Naive thymus-derived CD4-positive, alpha-beta T cell (primary cell): ENCODE measurements at regions of chr5 and their contacts with region 1.

Region 1: DNA sequence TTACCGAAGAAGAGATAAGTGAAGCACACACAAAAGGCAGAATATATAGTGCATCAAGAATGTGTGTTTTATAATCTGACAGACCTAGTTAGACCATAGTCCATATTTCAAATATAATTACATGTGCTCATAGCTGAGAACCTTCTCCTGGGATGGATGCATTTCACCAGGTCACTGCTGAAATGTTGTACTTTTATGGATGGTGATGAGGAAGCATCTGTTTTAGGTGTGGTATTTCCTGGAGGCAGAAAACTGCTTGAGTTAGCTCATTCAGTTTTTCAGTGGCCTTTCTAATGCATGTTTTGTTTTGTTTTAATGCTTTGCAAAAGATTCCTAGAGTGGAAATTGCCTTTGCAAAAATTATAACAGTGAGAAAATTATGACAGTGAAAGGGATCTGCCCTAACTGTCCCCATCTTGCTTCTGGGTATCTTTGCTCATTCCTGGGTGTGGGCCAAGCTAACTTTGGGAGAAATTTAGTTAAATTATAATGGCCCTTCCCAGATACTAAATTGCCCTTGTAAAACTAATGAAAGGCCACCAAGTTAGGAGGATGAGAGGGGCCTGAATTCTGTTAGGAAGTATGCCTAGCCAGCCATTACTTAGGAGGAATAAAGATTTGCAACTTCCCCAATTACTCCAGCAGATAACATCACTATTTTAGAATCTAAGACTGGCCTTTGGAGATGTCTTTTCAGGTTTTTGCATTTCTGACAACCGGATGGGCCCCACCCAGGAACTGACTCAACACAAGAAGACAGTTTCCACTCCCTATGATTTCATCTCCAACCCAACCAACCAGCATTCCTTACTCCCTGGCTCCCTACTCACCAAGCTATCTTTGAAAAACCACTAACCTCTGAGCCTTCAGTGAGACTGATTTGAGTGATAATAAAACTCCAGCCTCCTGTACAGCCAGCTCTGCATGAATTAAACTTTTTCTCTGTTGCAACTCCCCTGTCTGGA is 7.0 kb upstream of the IL12B start:
- DNase-seq: peak in 8 of 9 donors; percentile 17 to 43 (median 34)
- ATAC-seq: peak; percentile 74
- H3K4me3 ChIP-seq: no peak overlapping the region
- H3K4me3 Mint-ChIP-seq: peak overlapping the region; percentile 20 to 73 (median 55)
- H3K27ac ChIP-seq: peak overlapping the region; percentile 20
- H3K27ac Mint-ChIP-seq: peak overlapping the region; percentile 67 to 91 (median 86)
- H3K4me1 ChIP-seq: peaks cover 25 to 40% of the 10 kb centered on the region in 2 donors
- H3K4me1 Mint-ChIP-seq: peaks cover 26 to 82% (median 58%) of the 10 kb centered on the region in 7 donors
- H3K27me3 ChIP-seq: no peaks in the 10 kb centered on the region
- H3K27me3 Mint-ChIP-seq: no peaks in the 10 kb centered on the region

Region 2: GRCh38 chr5:159377653-159378052 is 40.4 kb after region 1 on chr5:
- CTCF ChIA-PET with region 1: no interaction called
- POLR2A ChIA-PET with region 1: no interaction called
- intact Hi-C with region 1: no loop called
- DNase-seq: no peak
- ATAC-seq: no peak
- H3K4me3 ChIP-seq: no peak overlapping the region
- H3K4me3 Mint-ChIP-seq: no peak overlapping the region
- H3K27ac ChIP-seq: no peak overlapping the region
- H3K27ac Mint-ChIP-seq: no peak overlapping the region
- H3K4me1 ChIP-seq: no peaks in the 10 kb centered on the region
- H3K4me1 Mint-ChIP-seq: no peaks in the 10 kb centered on the region
- H3K27me3 ChIP-seq: no peaks in the 10 kb centered on the region
- H3K27me3 Mint-ChIP-seq: peaks cover 0 to 40% (median 7%) of the 10 kb centered on the region in 5 donors

Region 3: DNA sequence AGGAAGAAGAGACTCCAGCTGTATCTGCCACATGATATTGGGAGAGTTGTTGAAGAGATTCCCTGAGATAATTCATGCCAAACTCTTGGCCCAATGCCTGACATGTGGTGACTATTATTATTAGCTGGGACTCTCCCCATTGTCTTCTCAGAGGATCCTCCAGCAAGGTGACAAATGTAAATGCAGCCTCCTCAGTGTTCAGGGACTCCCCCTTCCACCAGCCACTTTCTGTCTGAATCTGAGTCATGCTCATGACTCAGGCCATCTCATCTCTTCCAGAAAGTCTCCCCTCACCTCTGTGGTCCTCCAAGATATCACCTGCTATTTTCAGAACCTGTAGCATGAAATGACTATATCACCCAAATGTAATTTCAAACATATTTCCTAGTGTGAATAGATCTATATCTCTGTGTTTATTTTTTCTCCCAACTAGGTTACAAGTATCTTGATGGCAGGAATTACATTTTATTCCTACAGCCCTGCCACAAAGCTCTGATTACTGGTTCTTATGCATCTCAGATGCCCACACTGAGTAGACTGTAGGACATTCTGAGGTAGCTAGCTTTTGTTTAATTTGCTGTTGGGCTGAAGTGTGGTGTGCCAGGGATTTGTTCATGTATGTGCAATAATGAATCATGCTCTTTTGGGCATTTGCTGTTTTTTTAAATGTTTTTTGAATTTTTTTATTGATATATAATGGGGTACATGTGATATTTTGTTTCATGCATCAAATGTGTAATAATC is 119.6 kb after region 1 on chr5:
- CTCF ChIA-PET with region 1: no interaction called
- POLR2A ChIA-PET with region 1: no interaction called
- intact Hi-C with region 1: loop called in 1 of 2 experiments (anchors 5 kb)
- DNase-seq: peak in 1 of 9 donors; percentile 56
- ATAC-seq: peak; percentile 50
- H3K4me3 ChIP-seq: no peak overlapping the region
- H3K4me3 Mint-ChIP-seq: no peak overlapping the region
- H3K27ac ChIP-seq: no peak overlapping the region
- H3K27ac Mint-ChIP-seq: no peak overlapping the region
- H3K4me1 ChIP-seq: no peaks in the 10 kb centered on the region
- H3K4me1 Mint-ChIP-seq: peaks cover 0 to 40% (median 0%) of the 10 kb centered on the region in 7 donors
- H3K27me3 ChIP-seq: no peaks in the 10 kb centered on the region
- H3K27me3 Mint-ChIP-seq: peaks cover 0 to 70% (median 4%) of the 10 kb centered on the region in 5 donors

Region 4: DNA sequence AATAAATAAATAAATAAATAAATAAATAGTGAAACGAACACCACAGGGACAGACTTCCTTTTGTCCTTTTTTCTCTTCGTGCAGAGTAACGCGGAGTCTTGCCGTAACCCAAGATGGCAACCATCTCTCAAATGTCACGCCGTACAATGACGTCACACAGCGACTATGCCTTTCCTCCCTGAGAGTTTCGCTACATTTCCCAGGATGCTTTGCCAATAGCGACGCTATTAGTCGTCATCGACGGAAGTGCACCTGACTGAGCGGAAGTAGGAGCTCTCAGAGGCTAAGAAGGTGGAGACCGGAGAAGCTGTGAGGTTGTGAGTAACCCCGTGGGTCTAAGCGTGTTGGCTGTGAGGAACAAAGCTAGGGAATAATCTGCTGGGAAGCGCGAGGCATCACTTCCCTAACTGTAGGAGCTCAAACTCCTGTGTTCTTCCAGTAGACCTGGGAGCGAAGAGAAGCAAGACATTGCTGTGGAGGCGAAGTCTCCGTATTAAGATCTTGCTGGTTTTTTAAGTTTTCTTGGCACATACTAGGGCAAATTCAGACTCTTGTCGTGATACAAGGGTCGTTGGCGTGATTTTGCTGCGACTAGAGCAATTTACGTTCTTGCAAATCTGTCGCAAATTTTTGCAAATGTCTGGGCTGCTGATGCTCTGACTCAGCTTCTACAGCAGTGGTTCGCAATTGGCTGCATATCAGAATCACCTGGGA is 671.8 kb after region 1 on chr5 and contains the start of gene TTC1:
- CTCF ChIA-PET with region 1: no interaction called
- POLR2A ChIA-PET with region 1: no interaction called
- intact Hi-C with region 1: loop called in 1 of 2 experiments (anchors 5 kb)
- DNase-seq: peak; percentile 71 to 96 (median 91)
- ATAC-seq: peak; percentile 99
- H3K4me3 ChIP-seq: peak within 1 kb of the TSS; percentile 84
- H3K4me3 Mint-ChIP-seq: peak within 1 kb of the TSS; percentile 93 to 99 (median 96)
- H3K27ac ChIP-seq: peak within 1 kb of the TSS; percentile 85
- H3K27ac Mint-ChIP-seq: peak within 1 kb of the TSS; percentile 91 to 99 (median 97)
- H3K4me1 ChIP-seq: peaks cover 9 to 13% of the 10 kb centered on the region in 2 donors
- H3K4me1 Mint-ChIP-seq: peaks cover 19 to 40% (median 31%) of the 10 kb centered on the region in 7 donors
- H3K27me3 ChIP-seq: no peaks in the 10 kb centered on the region
- H3K27me3 Mint-ChIP-seq: peaks cover 0 to 3% (median 0%) of the 10 kb centered on the region in 5 donors
- total RNA-seq, gene TTC1: 24.3 to 56.5 (median 41.7) TPM